Activated CD4-positive, alpha-beta memory T cell treated with anti-CD3 and anti-CD28 coated beads for 36 hours (primary cell): ENCODE measurements at regions of chr3 and their contacts with region 1.

Region 1: DNA sequence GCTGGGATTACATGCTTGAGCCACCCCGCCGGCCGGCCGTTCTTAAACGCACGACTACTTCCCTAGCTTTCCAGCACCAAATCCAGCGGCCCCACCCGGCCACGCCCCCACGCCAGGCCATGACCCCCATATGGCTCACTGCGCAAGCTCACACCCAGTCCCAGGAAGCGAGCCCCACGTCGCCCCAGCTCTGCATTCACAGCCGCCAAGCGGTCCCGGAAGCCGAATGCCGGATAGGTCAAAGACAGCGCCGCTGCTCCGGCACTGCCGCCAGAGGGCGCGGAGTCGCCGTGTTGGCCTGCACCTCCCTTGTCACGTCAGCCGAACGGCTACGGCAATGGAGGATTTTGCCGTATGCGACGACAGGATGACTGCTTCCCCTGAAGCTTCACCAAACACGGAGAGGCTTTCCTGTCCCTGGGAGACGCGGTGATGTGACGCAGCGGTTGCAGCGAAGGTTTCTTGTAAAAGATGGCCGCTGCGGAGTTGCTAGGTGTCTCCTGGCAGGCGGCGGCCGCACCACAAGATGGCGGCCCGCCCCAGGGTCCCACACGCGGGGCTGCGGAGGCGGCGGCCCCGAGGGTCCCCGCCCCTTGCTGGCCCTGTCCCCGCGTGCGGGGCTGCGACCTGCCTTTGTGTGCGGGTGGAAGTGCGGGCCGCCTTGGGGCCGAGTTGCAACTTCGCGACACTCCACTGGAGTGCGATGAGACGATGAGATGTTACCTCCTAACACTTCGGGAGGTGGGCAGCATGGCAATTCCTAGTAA is 30.2 kb upstream of the RPN1 start:
- DNase-seq: peak; percentile 98
- H3K4me3 Mint-ChIP-seq: peak overlapping the region; percentile 91
- H3K27ac Mint-ChIP-seq: peak overlapping the region; percentile 97
- H3K4me1 Mint-ChIP-seq: peaks cover 21% of the 10 kb centered on the region
- H3K27me3 Mint-ChIP-seq: no peaks in the 10 kb centered on the region

Region 2: GRCh38 chr3:128617557-128618397 is 63.0 kb before region 1 on chr3:
- CTCF ChIA-PET with region 1: interaction called, 22 read pairs
- POLR2A ChIA-PET with region 1: interaction called, 9 read pairs
- intact Hi-C with region 1: loop called (anchors 1 kb)
- DNase-seq: peak; percentile 99
- H3K4me3 Mint-ChIP-seq: peak overlapping the region; percentile 88
- H3K27ac Mint-ChIP-seq: peak overlapping the region; percentile 92
- H3K4me1 Mint-ChIP-seq: peaks cover 36% of the 10 kb centered on the region
- H3K27me3 Mint-ChIP-seq: no peaks in the 10 kb centered on the region

Region 3: DNA sequence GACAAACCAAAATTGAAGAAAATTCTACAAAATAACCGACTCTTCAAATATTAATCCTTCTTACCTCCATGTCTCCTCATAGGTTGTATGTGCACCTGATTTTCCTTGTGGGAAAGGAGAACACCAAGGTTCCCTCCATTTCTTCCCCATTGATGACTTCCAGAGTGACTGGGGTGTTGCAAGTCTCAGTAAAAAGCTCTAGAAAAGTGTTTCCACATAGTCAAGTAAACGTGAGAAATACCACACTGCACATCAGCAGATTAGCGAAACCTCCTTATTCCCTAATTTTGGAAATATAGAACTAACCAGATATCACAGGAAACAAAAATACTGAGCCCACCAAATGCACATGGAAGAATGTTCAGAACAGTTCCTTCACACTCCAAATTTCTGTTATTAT is 25.3 kb before region 1 on chr3:
- CTCF ChIA-PET with region 1: interaction called, 22 read pairs
- POLR2A ChIA-PET with region 1: interaction called, 17 read pairs
- intact Hi-C with region 1: loop called (anchors 1 kb)
- DNase-seq: no peak
- H3K4me3 Mint-ChIP-seq: no peak overlapping the region
- H3K27ac Mint-ChIP-seq: no peak overlapping the region
- H3K4me1 Mint-ChIP-seq: peaks cover 11% of the 10 kb centered on the region
- H3K27me3 Mint-ChIP-seq: no peaks in the 10 kb centered on the region

Region 4: DNA sequence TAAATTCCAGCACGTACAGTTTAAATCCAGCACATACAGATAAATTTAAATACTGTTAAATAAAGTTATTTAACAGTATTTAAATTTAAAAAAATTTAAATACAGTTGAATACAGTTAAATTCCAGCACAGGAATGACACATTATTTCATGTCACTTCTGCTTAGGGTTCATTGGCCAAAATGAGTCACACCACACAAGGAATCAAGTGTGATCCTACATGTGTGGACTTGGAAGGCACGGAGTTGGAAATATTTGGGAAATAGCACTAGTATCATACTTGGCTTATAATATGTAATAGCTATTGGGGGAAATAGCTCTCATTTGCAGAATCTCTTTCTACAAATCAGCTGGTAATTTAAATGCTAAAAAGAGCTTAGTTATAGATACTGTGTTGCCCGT is 55.8 kb after region 1 on chr3:
- CTCF ChIA-PET with region 1: interaction called, 16 read pairs
- POLR2A ChIA-PET with region 1: no interaction called
- intact Hi-C with region 1: no loop called
- DNase-seq: no peak
- H3K4me3 Mint-ChIP-seq: no peak overlapping the region
- H3K27ac Mint-ChIP-seq: no peak overlapping the region
- H3K4me1 Mint-ChIP-seq: peaks cover 61% of the 10 kb centered on the region
- H3K27me3 Mint-ChIP-seq: no peaks in the 10 kb centered on the region

Region 5: DNA sequence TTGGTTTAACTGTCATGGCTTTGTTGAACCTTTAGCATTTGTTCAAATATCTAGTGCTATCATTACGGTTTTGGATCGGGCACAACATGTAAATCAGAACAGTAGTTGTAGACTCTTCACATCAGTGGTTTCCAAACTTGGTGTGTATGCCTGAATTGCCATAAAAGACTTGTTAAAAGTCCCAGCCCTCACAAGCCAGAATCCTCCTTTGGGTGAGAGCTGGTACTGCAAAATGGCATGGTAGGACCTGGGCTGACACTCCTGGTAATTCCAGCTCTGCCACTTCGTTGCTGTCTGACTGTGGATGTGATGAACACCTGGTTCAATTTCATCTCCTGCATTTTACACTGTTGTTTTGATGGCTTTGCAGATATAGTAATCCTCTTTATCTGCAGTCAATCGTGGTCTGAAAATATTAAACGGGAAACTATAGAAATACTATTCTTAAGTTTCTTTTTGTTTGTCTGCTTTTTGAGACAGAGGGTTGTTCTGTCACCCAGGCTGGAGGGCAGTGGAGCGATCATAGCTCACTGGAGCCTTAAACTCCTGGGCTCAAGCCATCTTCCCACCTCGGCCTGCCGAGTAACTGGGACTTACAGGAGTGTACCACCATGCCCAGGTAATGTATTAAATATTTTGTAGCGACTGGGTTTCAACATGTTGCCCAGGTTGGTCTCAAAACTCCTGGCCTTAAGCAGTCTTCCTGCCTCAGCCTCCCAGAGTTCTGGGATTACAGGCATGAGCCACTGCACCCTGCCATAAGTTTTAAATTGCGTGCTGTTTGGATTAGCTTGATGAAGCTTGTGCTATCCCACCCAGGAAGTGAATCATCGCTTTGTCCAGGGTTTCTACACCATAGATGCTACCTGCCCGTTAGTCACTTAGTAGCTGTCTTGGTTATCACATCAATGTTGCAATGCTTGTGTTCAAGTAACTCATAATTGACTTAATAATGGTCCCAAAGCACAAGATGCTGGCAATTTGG is 106.8 kb after region 1 on chr3:
- CTCF ChIA-PET with region 1: interaction called, 60 read pairs
- POLR2A ChIA-PET with region 1: interaction called, 10 read pairs
- intact Hi-C with region 1: loop called (anchors 1 kb)
- DNase-seq: peak; percentile 60
- H3K4me3 Mint-ChIP-seq: peak overlapping the region; percentile 67
- H3K27ac Mint-ChIP-seq: peak overlapping the region; percentile 98
- H3K4me1 Mint-ChIP-seq: peaks cover 93% of the 10 kb centered on the region
- H3K27me3 Mint-ChIP-seq: no peaks in the 10 kb centered on the region

Region 6: DNA sequence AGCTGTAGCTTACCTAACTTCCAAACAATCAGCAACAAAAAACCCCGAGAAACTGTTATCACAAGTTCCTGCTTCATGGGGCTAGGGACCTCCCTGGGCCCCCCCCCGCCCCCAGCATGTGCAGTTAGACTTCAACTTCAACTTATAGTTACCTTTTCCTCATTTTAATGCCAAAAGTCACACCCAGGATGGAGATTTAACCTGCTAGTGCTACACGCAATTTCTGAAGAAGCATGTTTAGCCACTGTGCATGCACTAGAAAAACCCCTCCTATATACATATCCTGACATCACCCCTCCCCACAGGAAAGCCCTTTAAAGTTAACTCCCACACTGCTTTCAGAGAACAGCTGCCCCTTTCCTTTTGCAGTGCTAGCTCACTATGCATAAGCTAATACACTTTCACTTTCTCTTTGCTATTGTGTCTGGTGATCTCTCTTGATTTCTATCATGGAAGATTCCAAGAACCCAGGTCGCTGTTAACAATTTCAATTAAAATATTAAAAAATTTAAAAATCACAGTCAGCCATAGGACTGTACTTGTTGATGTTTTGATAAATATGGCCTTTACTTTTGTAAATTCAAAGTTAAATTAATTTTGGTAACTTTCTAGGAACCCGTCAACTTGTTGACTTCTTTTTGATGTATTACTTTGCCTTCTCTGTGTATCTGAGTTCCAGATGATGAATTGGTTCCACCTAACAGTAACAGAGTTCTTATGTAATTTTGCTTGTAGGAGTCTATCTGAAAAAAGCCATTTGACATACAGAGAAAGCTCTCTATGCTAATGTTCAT is 123.4 kb after region 1 on chr3:
- CTCF ChIA-PET with region 1: interaction called, 114 read pairs
- POLR2A ChIA-PET with region 1: interaction called, 12 read pairs
- intact Hi-C with region 1: loop called (anchors 1 kb)
- DNase-seq: peak; percentile 76
- H3K4me3 Mint-ChIP-seq: peak overlapping the region; percentile 49
- H3K27ac Mint-ChIP-seq: peak overlapping the region; percentile 94
- H3K4me1 Mint-ChIP-seq: peaks cover 78% of the 10 kb centered on the region
- H3K27me3 Mint-ChIP-seq: no peaks in the 10 kb centered on the region

Region 7: GRCh38 chr3:128879125-128879969 is 198.6 kb after region 1 on chr3 and contains the start of gene ACAD9:
- CTCF ChIA-PET with region 1: interaction called, 60 read pairs
- POLR2A ChIA-PET with region 1: interaction called, 25 read pairs
- intact Hi-C with region 1: loop called (anchors 1 kb)
- DNase-seq: peak; percentile 98
- H3K4me3 Mint-ChIP-seq: peak within 1 kb of the TSS; percentile 93
- H3K27ac Mint-ChIP-seq: peak within 1 kb of the TSS; percentile 95
- H3K4me1 Mint-ChIP-seq: peaks cover 61% of the 10 kb centered on the region
- H3K27me3 Mint-ChIP-seq: no peaks in the 10 kb centered on the region
- total RNA-seq, gene ACAD9: 45.3 to 45.5 TPM